WTC11 (cell line): ENCODE measurements at regions of chr3 and their contacts with region 1.

Region 1: DNA sequence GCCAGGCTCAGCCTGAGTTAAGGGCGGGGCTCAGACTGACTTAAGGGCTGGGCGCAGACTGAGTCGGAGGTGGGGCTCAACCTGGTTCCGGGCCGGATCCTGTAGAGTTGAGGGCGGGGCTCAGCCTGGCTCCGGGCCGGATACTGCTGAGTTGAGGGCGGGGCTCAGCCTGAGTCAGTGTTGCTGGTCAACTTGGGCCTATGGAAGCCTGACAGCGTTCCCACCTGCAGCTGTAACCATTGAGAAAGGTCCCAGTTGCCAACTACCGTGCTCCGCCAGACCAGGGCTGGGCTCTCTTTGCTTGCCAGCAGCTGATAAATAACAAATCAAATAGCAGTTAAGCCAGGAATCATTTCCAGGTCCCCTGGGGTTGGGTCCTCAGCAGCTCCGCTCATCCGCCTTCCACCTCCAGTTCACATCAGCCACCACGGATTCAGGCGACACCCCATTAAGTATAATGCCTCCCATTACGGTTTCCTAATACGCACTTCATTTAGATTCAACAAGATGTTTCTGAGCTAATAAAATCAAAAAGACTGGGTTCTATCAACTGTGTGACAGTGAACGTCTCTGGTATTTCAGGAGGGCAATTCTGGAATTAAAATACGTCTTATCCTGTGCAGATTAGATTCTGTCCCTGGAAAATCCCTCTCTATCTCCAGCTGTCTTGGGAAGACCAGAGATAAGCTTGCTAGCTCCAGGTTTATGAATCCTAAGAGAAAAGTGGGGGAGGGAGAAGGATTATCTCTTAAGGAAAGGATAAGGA is 7.3 kb downstream of the GRIP2 start:
- DNase-seq: peak; percentile 91
- ATAC-seq: peak; percentile 94
- H3K4me3 Mint-ChIP-seq: peak overlapping the region; percentile 33; the same call in 1 of the 2 replicates
- H3K27ac Mint-ChIP-seq: peak overlapping the region; percentile 86
- H3K4me1 Mint-ChIP-seq: peaks cover 53% of the 10 kb centered on the region
- H3K27me3 Mint-ChIP-seq: no peaks in the 10 kb centered on the region; the same call in 1 of the 2 replicates
- CTCF ChIP-seq: no peak

Region 2: GRCh38 chr3:14363991-14364390 is 168.9 kb before region 1 on chr3:
- CTCF ChIA-PET with region 1: no interaction called
- POLR2A ChIA-PET with region 1: no interaction called
- DNase-seq: no peak
- ATAC-seq: no peak
- H3K4me3 Mint-ChIP-seq: no peak overlapping the region
- H3K27ac Mint-ChIP-seq: no peak overlapping the region
- H3K4me1 Mint-ChIP-seq: peaks cover 21% of the 10 kb centered on the region
- H3K27me3 Mint-ChIP-seq: peaks cover 2% of the 10 kb centered on the region; the same call in 1 of the 2 replicates
- CTCF ChIP-seq: no peak

Region 3: DNA sequence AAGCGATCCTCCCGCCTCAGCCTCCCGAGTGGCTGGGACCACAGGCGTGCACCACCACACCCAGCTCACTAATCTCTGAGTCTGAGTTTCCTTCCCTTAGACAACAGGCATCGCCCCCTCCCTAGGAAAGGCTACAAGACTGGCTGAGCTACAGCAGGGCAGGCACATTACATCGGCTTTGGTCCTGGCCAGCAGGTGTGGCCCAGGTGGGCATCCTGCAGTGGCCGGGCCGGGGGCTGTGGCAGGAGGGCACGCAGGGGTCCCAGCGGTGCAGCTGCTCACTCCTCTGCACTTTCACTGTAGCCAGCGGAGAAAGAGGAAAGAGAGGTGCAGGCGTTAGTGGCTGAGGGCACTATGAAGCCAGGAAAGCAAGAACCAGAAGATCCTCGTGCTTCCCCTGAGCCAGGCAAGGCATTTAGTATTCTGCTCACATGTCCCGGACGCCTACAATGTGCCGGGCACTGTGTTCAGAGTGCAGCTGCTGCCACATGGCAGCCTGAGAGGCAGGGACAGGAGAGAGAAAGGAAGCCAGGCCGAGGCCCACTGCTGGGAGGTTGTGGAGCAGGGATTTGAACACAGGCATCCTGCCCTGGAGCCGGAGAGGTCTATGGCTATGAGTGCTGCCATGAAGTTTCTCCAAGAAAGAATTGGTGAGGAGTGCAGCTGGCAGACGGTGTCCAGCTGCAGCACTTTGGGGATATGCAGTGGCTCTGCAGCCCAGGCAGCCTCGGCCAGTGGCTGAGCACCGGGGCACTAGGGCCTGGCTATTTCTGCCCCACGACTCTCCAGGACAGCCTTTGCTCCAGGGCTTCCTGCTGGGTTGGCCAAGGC is 15.1 kb before region 1 on chr3:
- CTCF ChIA-PET with region 1: interaction called, 10 read pairs
- POLR2A ChIA-PET with region 1: no interaction called
- DNase-seq: no peak
- ATAC-seq: no peak
- H3K4me3 Mint-ChIP-seq: no peak overlapping the region
- H3K27ac Mint-ChIP-seq: no peak overlapping the region
- H3K4me1 Mint-ChIP-seq: no peaks in the 10 kb centered on the region
- H3K27me3 Mint-ChIP-seq: no peaks in the 10 kb centered on the region
- CTCF ChIP-seq: no peak

Region 4: GRCh38 chr3:14602006-14602803 is 69.3 kb after region 1 on chr3:
- CTCF ChIA-PET with region 1: interaction called, 13 read pairs
- POLR2A ChIA-PET with region 1: no interaction called
- DNase-seq: peak; percentile 65
- ATAC-seq: peak; percentile 63
- H3K4me3 Mint-ChIP-seq: peak overlapping the region; percentile 71
- H3K27ac Mint-ChIP-seq: no peak overlapping the region
- H3K4me1 Mint-ChIP-seq: peaks cover 12% of the 10 kb centered on the region
- H3K27me3 Mint-ChIP-seq: peaks cover 32% of the 10 kb centered on the region
- CTCF ChIP-seq: no peak; the same call in 1 of the 2 replicates